ENCODE measurements at regions of chr3 and their contacts with region 1.

Region 1: DNA sequence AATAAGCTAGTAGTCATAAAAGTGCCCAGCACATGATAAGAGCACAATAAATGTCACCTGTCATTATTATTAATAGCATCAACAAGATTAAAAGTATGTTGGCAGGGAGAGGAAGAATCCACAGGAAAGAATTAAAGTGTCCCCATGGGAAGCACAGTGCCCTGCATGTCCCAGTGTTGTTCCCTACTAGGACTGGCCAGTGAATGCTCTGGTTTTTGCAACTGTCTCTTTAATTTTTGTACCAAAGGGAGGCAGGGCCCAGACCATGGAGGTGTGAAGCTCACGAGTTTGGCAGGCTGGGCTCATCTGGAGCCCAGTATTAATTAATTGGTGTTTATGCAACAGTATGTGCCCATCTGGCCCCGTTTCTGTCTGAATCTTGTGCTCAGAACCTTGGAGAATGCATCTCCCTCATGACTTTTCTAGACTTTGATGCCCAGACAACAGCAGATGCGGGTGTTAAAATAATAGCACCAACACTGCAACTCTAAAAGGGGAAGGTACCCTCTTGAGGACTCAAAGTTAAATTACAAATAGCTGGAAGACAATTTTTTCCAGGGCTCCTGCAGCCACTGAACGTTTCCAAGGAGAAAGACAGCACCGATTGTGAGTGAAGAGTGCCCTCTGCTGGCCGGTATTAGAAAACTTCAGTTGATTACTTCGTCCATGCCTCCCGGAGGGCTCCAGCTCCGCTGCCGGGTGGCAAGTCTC is 71.9 kb upstream of the SPATA12 start:
- DNase-seq: peak; percentile 87
- H3K4me3 ChIP-seq: no peak overlapping the region
- H3K27ac ChIP-seq: no peak overlapping the region
- H3K4me1 ChIP-seq: no peaks in the 10 kb centered on the region
- H3K27me3 ChIP-seq: peaks cover 0 to 2% of the 10 kb centered on the region in 2 experiments
- CTCF ChIP-seq: peak; percentile 61 to 62
- POLR2A ChIP-seq: no peak

Region 2: DNA sequence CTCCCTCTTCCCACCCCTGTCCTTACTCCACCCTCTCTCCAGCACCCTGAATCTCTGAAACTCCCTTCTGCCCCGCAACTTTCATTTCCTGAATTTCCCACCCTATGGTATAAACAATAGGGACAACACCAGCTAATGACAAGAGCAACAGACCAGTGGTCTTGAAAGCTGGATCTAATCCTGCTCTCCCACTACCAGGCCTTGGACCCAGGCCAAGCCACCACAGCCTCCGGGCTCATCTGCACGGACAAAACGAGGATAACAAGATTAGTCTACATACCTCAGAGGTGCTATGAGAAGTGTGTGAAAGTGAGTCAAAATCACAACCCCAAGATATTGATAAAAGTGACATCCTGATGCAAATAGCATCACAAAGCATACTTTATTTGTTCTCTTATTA is 648.9 kb before region 1 on chr3:
- CTCF ChIA-PET with region 1: interaction called, 12 read pairs
- POLR2A ChIA-PET with region 1: no interaction called
- dilution Hi-C with region 1: no loop called
- intact Hi-C with region 1: no loop called
- DNase-seq: no peak
- H3K4me3 ChIP-seq: no peak overlapping the region
- H3K27ac ChIP-seq: no peak overlapping the region
- H3K4me1 ChIP-seq: no peaks in the 10 kb centered on the region
- H3K27me3 ChIP-seq: no peaks in the 10 kb centered on the region
- CTCF ChIP-seq: no peak
- POLR2A ChIP-seq: no peak

Region 3: DNA sequence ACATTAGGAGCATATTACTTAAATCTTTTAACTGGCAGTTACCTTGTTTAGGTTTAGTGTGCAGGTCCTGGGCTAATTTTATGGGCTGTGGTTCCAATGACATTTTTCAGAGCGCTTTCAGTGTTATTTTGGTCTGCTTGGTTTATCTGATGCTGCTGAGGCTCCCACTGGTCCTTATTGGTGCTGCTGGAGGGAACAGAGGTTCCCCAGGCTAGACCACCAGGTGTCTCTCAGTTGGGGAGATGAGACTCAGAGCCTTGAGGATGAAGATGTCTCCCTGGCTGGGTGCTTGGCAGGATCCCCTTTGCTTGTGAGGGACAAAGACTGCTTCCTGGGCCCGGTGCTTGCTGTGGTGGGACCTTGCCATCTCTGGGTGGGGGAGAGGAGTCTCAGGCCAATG is 277.3 kb before region 1 on chr3:
- CTCF ChIA-PET with region 1: interaction called, 109 read pairs
- POLR2A ChIA-PET with region 1: no interaction called
- dilution Hi-C with region 1: no loop called
- intact Hi-C with region 1: no loop called
- DNase-seq: no peak
- H3K4me3 ChIP-seq: no peak overlapping the region
- H3K27ac ChIP-seq: no peak overlapping the region
- H3K4me1 ChIP-seq: no peaks in the 10 kb centered on the region
- H3K27me3 ChIP-seq: no peaks in the 10 kb centered on the region
- CTCF ChIP-seq: no peak
- POLR2A ChIP-seq: no peak

Region 4: GRCh38 chr3:56812754-56813650 is 175.6 kb before region 1 on chr3:
- CTCF ChIA-PET with region 1: interaction called, 35 read pairs
- POLR2A ChIA-PET with region 1: no interaction called
- dilution Hi-C with region 1: no loop called
- intact Hi-C with region 1: no loop called
- DNase-seq: peak; percentile 71
- H3K4me3 ChIP-seq: peak overlapping the region in 1 of 3 experiments; percentile 33
- H3K27ac ChIP-seq: peak overlapping the region; percentile 65
- H3K4me1 ChIP-seq: peaks cover 14% of the 10 kb centered on the region
- H3K27me3 ChIP-seq: no peaks in the 10 kb centered on the region
- CTCF ChIP-seq: no peak
- POLR2A ChIP-seq: no peak

Region 5: DNA sequence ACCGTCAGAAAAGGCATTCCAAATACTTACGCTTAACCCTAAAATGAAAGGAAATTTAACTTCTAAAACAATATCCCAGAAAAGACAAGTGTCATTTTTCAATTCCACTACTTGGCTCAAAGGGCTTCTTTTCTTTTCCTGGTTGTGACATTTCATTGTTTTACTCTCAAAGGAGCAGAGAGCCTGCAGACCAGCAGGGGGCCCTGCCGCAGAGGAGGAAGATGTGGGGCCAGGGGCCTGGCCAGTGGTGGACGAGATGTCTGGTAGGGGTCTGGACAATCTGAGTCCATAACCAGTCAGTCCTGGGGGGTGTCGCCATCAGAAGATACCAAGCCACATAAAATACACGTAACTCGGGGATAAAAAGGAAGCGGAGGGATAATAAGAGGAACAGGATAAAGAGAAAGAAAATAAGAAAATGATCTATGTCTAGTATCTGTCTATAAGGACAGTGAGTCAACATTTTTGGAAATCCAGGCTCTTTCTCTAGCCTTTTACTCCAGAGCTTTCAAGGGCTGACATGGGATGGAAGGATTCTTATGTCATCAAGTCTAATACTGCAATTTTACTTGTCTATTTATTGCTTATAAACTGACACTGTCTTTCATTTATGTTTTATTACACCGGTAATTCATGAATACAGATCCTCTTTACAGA is 132.6 kb before region 1 on chr3:
- CTCF ChIA-PET with region 1: interaction called, 120 read pairs
- POLR2A ChIA-PET with region 1: no interaction called
- dilution Hi-C with region 1: no loop called
- intact Hi-C with region 1: loop called (anchors 1 kb)
- DNase-seq: peak; percentile 67
- H3K4me3 ChIP-seq: no peak overlapping the region
- H3K27ac ChIP-seq: no peak overlapping the region
- H3K4me1 ChIP-seq: peaks cover 8% of the 10 kb centered on the region
- H3K27me3 ChIP-seq: no peaks in the 10 kb centered on the region
- CTCF ChIP-seq: peak; percentile 87 to 89
- POLR2A ChIP-seq: no peak

Region 6: GRCh38 chr3:56890448-56891091 is 98.0 kb before region 1 on chr3:
- CTCF ChIA-PET with region 1: no interaction called
- POLR2A ChIA-PET with region 1: no interaction called
- dilution Hi-C with region 1: no loop called
- intact Hi-C with region 1: no loop called
- DNase-seq: no peak
- H3K4me3 ChIP-seq: no peak overlapping the region
- H3K27ac ChIP-seq: no peak overlapping the region
- H3K4me1 ChIP-seq: no peaks in the 10 kb centered on the region
- H3K27me3 ChIP-seq: no peaks in the 10 kb centered on the region
- CTCF ChIP-seq: no peak
- POLR2A ChIP-seq: no peak

Region 7: DNA sequence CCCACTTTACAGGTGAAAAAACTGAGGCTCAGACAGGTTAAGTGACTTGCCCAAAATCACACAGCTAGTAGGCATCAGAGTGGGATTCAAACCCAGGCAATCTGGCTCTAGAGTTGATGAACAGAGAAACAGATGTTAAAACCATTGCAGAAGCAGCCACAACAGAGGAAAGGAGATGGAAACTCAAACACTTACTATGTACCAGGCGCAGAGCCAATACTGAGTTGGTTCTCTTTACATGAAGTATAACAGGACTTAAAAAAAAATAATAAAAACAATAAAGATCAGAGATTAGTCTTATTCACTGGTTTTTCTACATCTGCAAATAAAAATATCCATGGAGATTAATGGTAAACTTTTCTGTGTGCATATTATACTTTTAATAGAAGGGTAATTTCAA is 13.0 kb before region 1 on chr3:
- CTCF ChIA-PET with region 1: interaction called, 32 read pairs
- POLR2A ChIA-PET with region 1: no interaction called
- dilution Hi-C with region 1: no loop called
- intact Hi-C with region 1: no loop called
- DNase-seq: peak; percentile 85
- H3K4me3 ChIP-seq: no peak overlapping the region
- H3K27ac ChIP-seq: no peak overlapping the region
- H3K4me1 ChIP-seq: peaks cover 27% of the 10 kb centered on the region
- H3K27me3 ChIP-seq: no peaks in the 10 kb centered on the region
- CTCF ChIP-seq: no peak
- POLR2A ChIP-seq: no peak

Measured in endothelial cell of umbilical vein (primary cell).